KBM-7 (cell line): ENCODE measurements at regions of chr17 and their contacts with region 1.

Region 1: DNA sequence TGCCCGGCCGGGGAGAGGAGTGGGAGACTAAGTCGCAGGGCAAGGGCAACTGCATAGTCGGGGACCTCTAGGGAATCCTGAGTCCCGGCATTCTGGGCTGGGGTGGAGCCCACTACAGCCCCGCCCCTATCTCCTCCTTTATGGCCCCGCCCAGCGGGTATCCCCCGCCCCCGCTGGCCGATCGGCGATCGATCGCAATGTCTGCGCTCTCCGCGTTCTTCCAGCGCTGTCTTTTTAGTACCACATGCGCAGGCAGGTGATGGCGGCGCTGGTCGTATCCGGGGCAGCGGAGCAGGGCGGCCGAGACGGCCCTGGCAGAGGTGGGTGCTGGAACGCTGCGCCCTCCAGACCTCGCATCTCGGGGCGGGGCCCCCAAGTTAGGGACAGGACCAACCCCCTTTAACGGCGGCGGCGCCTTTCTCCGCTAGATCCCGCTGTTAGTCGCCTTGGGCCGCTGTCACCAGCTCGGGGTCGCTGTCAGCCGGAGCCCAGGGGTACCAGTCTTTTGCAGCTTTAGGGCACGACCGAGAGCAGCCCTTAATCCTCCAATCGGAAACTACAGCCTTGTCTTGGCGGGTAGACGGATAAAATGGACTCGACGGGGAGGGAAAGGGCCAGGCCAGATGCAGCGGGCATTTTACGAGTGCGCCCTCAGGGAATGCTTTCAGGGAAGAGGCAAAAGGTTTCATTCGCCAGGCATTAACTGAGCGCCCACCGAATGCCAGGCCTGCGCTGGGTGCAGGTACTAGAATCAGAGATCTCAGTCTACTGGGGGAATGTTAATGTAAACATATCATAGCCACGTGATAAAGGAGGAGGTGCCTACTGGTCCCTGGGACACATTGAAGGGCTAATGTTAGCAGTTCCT is at the start of gene DPH1:
- DNase-seq: peak; percentile 83

Region 2: GRCh38 chr17:1915889-1916288 is 114.3 kb before region 1 on chr17:
- in situ Hi-C with region 1: loop called (anchors 10 kb)
- DNase-seq: peak; percentile 83

Region 3: GRCh38 chr17:2087597-2088211 is 57.6 kb after region 1 on chr17:
- in situ Hi-C with region 1: no loop called
- DNase-seq: peak; percentile 96